GM23248 (cell line): ENCODE measurements at regions of chr3 and their contacts with region 1.

Region 1: GRCh38 chr3:187679638-187680396 is 9.6 kb upstream of the SST start:
- DNase-seq: peak; percentile 80
- H3K4me3 ChIP-seq: no peak overlapping the region
- H3K27ac ChIP-seq: no peak overlapping the region
- H3K4me1 ChIP-seq: peaks cover 6% of the 10 kb centered on the region
- H3K27me3 ChIP-seq: no peaks in the 10 kb centered on the region

Region 2: GRCh38 chr3:186826976-186827731 is 852.7 kb before region 1 on chr3:
- in situ Hi-C with region 1: loop called (anchors 25 kb)
- DNase-seq: peak; percentile 93
- H3K4me3 ChIP-seq: peak overlapping the region; percentile 70
- H3K27ac ChIP-seq: no peak overlapping the region
- H3K4me1 ChIP-seq: peaks cover 4% of the 10 kb centered on the region
- H3K27me3 ChIP-seq: peaks cover 44% of the 10 kb centered on the region

Region 3: GRCh38 chr3:187227658-187228258 is 452.1 kb before region 1 on chr3:
- in situ Hi-C with region 1: loop called (anchors 5 kb)
- DNase-seq: peak; percentile 89
- H3K4me3 ChIP-seq: no peak overlapping the region
- H3K27ac ChIP-seq: 0 out of 2 replicates have a peak overlapping the region, but pooled peaks have one; percentile 23
- H3K4me1 ChIP-seq: peaks cover 18% of the 10 kb centered on the region
- H3K27me3 ChIP-seq: no peaks in the 10 kb centered on the region

Region 4: GRCh38 chr3:187783098-187783497 is 103.3 kb after region 1 on chr3:
- in situ Hi-C with region 1: no loop called
- DNase-seq: peak; percentile 96
- H3K4me3 ChIP-seq: 0 out of 2 replicates have a peak overlapping the region, but pooled peaks have one; percentile 25
- H3K27ac ChIP-seq: peak overlapping the region; percentile 70
- H3K4me1 ChIP-seq: peaks cover 14% of the 10 kb centered on the region
- H3K27me3 ChIP-seq: no peaks in the 10 kb centered on the region

Region 5: GRCh38 chr3:188389711-188390342 is 710.0 kb after region 1 on chr3:
- in situ Hi-C with region 1: no loop called
- DNase-seq: peak; percentile 55
- H3K4me3 ChIP-seq: no peak overlapping the region
- H3K27ac ChIP-seq: no peak overlapping the region
- H3K4me1 ChIP-seq: peaks cover 14% of the 10 kb centered on the region
- H3K27me3 ChIP-seq: no peaks in the 10 kb centered on the region